Activated CD4-positive, alpha-beta T cell treated with anti-CD3 and anti-CD28 coated beads, Interleukin-2, amount 10 ng/mL, durations not matched to agents 24 days and 14 days (primary cell): ENCODE measurements at regions of chr17 and their contacts with region 1.

Region 1: DNA sequence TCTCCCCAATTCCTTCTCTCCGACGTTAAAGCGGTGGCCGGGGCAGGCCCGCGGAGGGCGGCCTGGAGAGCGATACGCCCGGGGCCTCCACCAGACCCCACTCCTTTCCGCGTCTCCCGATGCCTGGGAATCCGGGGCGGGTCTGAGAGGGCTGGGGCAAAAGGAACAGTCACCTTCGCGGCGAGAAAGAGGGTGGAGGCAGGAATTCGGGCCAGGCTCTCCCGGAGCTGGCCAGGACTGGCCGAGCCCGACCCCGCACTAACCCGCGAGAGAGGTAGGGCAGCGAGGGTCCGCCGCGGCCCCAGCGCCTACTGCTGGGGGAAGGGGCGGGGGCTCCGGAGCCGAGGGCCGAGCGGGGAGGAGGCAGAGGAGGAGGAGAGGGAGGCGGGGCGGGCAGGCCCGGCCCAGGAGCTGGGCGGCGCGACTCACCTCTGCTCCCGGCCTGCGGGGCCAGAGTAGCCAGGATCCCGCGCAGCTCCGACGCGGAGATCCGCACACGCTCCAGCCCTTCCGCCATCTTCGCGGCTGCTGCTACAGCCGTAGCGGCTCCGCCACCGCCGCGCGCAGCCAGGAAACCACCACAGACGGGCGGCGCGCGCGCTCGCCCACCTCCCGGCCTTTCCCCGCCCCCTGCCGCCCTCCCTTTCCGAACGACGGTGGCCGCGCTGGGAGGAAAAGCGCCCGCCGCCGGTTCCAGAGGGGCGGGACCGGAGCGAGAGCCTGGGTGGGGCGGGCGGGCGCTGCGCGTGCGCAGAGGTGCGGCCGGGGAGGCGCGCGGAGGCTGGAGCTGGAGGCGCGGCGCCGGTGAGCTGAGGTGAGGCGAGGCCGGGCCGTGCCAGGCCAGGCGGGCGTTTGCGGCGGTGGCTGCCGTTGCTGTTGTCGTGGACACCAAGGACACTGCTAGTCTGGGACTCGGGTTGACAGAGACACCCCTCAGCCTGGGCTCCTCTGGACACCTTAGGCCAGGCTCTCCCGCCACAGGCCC is at the starts of genes SMG6 and SRR:
- DNase-seq: peak; percentile 97
- H3K4me3 Mint-ChIP-seq: peak within 1 kb of the TSS; percentile 91
- H3K27ac Mint-ChIP-seq: peak within 1 kb of the TSS; percentile 84
- H3K4me1 Mint-ChIP-seq: peaks cover 35% of the 10 kb centered on the region
- H3K27me3 Mint-ChIP-seq: no peaks in the 10 kb centered on the region
- total RNA-seq, gene SMG6: 31.6 and 36.2 TPM in 2 replicates
- total RNA-seq, gene SRR: 13.8 and 15.6 TPM in 2 replicates

Region 2: DNA sequence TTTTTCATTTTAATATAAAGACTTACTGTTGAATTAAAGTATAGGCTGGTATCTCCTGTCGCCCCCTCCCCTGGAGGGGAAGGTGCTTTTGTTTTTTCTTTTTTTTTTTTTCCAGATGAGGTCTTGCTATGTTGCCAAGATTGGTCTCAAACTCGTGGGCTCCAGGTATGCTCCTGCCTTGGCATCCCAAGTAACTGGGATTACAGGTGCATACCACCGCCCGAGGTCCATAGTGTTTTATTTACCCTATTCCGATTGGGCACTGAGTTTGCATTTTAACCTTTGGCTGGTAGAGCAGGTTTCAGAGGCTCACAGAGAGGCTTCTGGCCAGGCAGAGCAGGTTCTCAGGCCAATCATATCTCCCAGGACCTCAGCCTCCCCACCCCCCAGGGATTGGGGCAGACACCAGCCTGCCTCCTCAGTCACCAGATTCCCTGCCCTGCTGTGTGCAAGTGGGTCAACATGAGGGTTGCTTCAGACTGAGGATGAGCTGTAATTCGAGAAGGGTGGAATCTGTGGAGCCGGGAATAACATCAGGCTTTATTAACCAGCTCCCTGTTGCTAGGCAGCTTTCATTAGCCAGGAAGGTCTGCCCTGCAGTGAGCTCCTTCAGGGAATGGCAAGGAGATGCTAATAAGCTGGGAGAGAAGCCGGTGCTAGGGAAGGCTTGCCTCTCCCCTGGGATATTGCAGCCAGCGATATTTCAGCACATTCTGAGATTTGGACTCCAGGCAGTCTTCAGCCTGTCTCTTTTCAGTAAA is 44.2 kb after region 1 on chr17:
- intact Hi-C with region 1: loop called (anchors 2 kb)
- DNase-seq: no peak
- H3K4me3 Mint-ChIP-seq: no peak overlapping the region
- H3K27ac Mint-ChIP-seq: no peak overlapping the region
- H3K4me1 Mint-ChIP-seq: peaks cover 4% of the 10 kb centered on the region
- H3K27me3 Mint-ChIP-seq: no peaks in the 10 kb centered on the region